ENCODE measurements at regions of chr17 and their contacts with region 1.

Region 1: DNA sequence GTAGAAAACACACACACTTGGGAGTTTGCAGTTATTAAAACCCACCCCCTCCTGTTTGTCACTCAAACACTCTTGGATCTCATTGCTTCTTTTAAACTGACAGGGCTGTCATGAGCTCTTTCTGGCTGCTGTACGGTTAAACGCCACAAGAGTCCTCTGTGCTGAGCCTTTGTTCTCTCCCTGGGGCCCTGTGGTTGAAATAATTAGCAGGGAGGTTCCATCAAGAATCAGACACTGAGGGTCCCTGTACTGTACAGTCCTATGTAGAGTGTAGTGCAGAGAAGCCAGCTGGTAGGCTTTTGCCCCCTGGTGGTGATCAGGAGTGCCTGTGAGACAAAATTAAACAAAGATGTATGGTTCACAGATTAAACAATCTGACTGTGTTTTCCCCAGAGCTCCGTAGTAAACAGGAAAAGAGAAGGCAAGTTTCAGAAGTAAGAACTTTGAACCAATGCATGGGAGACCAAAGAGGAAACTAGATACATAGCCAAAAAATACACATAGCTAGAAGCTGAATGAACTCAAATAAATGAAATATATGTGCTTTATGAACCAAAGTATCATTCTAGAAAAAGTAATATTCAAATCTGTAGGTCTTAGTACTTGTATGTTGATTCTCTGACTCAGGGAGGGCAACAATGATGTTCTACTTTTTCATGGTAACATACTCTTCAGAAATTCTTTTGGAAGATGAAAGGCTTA is 1.4 kb upstream of the SSH2 start:
- DNase-seq: peak; percentile 92
- ATAC-seq: peak; percentile 71
- H3K4me3 ChIP-seq: peak overlapping the region; percentile 77 to 94 (median 86)
- H3K4me3 Mint-ChIP-seq: no peak overlapping the region
- H3K27ac ChIP-seq: peak overlapping the region; percentile 28 to 86
- H3K27ac Mint-ChIP-seq: no peak overlapping the region
- H3K4me1 ChIP-seq: peaks cover 26 to 30% of the 10 kb centered on the region in 2 donors
- H3K4me1 Mint-ChIP-seq: peaks cover 34% of the 10 kb centered on the region
- H3K27me3 ChIP-seq: no peaks in the 10 kb centered on the region
- H3K27me3 Mint-ChIP-seq: no peaks in the 10 kb centered on the region
- CTCF ChIP-seq: peak; percentile 91

Region 2: GRCh38 chr17:29579866-29580771 is 351.3 kb before region 1 on chr17:
- CTCF ChIA-PET with region 1: interaction called, 17 read pairs
- POLR2A ChIA-PET with region 1: interaction called, 3 read pairs
- intact Hi-C with region 1: loop called (anchors 2 kb)
- DNase-seq: peak; percentile 93
- ATAC-seq: peak; percentile 96
- H3K4me3 ChIP-seq: no peak overlapping the region
- H3K4me3 Mint-ChIP-seq: no peak overlapping the region
- H3K27ac ChIP-seq: no peak overlapping the region
- H3K27ac Mint-ChIP-seq: peak overlapping the region; percentile 87
- H3K4me1 ChIP-seq: peaks cover 19 to 23% of the 10 kb centered on the region in 2 donors
- H3K4me1 Mint-ChIP-seq: peaks cover 27% of the 10 kb centered on the region
- H3K27me3 ChIP-seq: no peaks in the 10 kb centered on the region
- H3K27me3 Mint-ChIP-seq: no peaks in the 10 kb centered on the region
- CTCF ChIP-seq: peak; percentile 79

Region 3: GRCh38 chr17:29722411-29723198 is 208.8 kb before region 1 on chr17:
- CTCF ChIA-PET with region 1: interaction called, 13 read pairs
- POLR2A ChIA-PET with region 1: no interaction called
- intact Hi-C with region 1: loop called (anchors 1 kb)
- DNase-seq: peak; percentile 93
- ATAC-seq: peak; percentile 83
- H3K4me3 ChIP-seq: peak overlapping the region in 4 of 5 experiments; percentile 31 to 44 (median 37)
- H3K4me3 Mint-ChIP-seq: peak overlapping the region; percentile 78
- H3K27ac ChIP-seq: peak overlapping the region; percentile 81 to 94
- H3K27ac Mint-ChIP-seq: peak overlapping the region; percentile 91
- H3K4me1 ChIP-seq: peaks cover 91% of the 10 kb centered on the region in 2 donors
- H3K4me1 Mint-ChIP-seq: peaks cover 85% of the 10 kb centered on the region
- H3K27me3 ChIP-seq: no peaks in the 10 kb centered on the region
- H3K27me3 Mint-ChIP-seq: no peaks in the 10 kb centered on the region
- CTCF ChIP-seq: no peak

Region 4: GRCh38 chr17:29807520-29808351 is 123.6 kb before region 1 on chr17:
- CTCF ChIA-PET with region 1: interaction called, 359 read pairs
- POLR2A ChIA-PET with region 1: interaction called, 12 read pairs
- intact Hi-C with region 1: loop called (anchors 1 kb)
- DNase-seq: peak; percentile 76
- ATAC-seq: peak; percentile 77
- H3K4me3 ChIP-seq: peak overlapping the region in 1 of 5 experiments; percentile 9
- H3K4me3 Mint-ChIP-seq: peak overlapping the region; percentile 4
- H3K27ac ChIP-seq: no peak overlapping the region
- H3K27ac Mint-ChIP-seq: no peak overlapping the region
- H3K4me1 ChIP-seq: peaks cover 23 to 29% of the 10 kb centered on the region in 2 donors
- H3K4me1 Mint-ChIP-seq: peaks cover 27% of the 10 kb centered on the region
- H3K27me3 ChIP-seq: no peaks in the 10 kb centered on the region
- H3K27me3 Mint-ChIP-seq: no peaks in the 10 kb centered on the region
- CTCF ChIP-seq: peak; percentile 94

Region 5: DNA sequence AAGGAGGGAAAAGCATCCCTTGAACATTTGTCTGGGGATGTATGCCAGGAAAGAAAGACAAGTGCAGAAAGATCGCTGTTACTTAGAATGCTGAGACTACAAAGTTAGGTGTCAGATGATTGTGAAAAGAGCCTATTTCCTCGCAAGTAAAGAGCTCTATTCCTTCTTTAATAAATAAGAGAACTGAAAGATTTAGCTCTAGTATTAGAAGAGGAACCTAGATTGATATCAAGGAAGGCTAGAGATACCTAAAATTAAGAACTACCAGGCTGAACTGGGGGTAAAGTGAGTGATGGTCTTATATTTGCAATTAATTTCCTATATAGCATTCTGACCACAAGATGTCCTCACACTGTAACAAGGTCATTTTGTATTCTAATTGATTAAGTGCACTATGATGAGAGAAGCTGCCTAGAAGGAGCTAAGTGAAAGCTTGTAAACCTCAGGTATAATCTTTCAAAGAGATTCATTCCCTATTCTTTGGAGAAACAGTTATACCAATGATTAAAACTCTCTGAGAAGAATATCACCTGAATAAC is 63.7 kb before region 1 on chr17:
- CTCF ChIA-PET with region 1: interaction called, 71 read pairs
- POLR2A ChIA-PET with region 1: interaction called, 7 read pairs
- intact Hi-C with region 1: loop called (anchors 1 kb)
- DNase-seq: peak; percentile 29
- ATAC-seq: no peak
- H3K4me3 ChIP-seq: no peak overlapping the region
- H3K4me3 Mint-ChIP-seq: no peak overlapping the region
- H3K27ac ChIP-seq: no peak overlapping the region
- H3K27ac Mint-ChIP-seq: no peak overlapping the region
- H3K4me1 ChIP-seq: peaks cover 21 to 32% of the 10 kb centered on the region in 2 donors
- H3K4me1 Mint-ChIP-seq: peaks cover 45% of the 10 kb centered on the region
- H3K27me3 ChIP-seq: no peaks in the 10 kb centered on the region
- H3K27me3 Mint-ChIP-seq: no peaks in the 10 kb centered on the region
- CTCF ChIP-seq: no peak

Region 6: DNA sequence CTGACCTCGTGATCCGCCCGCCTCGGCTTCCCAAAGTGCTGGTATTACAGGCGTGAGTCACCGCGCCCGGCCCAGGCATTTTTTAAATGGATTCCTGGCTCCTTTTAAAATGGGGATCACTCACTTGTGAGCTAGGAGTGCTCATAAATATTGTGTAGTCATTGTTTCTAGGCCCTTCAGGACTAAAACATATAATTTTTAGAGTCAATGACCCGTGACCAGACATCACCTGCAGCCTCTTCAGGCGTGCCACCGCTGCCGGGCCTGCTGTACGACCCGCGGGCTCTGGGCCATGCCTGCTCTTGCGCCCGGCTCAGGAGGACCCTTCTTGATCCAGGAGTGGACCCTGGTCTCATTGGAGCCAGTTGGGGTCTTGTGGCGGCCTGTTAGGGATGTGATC is 40.9 kb after region 1 on chr17:
- CTCF ChIA-PET with region 1: no interaction called
- POLR2A ChIA-PET with region 1: no interaction called
- intact Hi-C with region 1: no loop called
- DNase-seq: no peak
- ATAC-seq: no peak
- H3K4me3 ChIP-seq: no peak overlapping the region
- H3K4me3 Mint-ChIP-seq: no peak overlapping the region
- H3K27ac ChIP-seq: no peak overlapping the region
- H3K27ac Mint-ChIP-seq: no peak overlapping the region
- H3K4me1 ChIP-seq: peaks cover 0 to 4% of the 10 kb centered on the region in 2 donors
- H3K4me1 Mint-ChIP-seq: peaks cover 4% of the 10 kb centered on the region
- H3K27me3 ChIP-seq: no peaks in the 10 kb centered on the region
- H3K27me3 Mint-ChIP-seq: no peaks in the 10 kb centered on the region
- CTCF ChIP-seq: no peak

Region 7: GRCh38 chr17:30000001-30000754 is 68.8 kb after region 1 on chr17:
- CTCF ChIA-PET with region 1: interaction called, 10 read pairs
- POLR2A ChIA-PET with region 1: no interaction called
- intact Hi-C with region 1: no loop called
- DNase-seq: no peak
- ATAC-seq: no peak
- H3K4me3 ChIP-seq: no peak overlapping the region
- H3K4me3 Mint-ChIP-seq: no peak overlapping the region
- H3K27ac ChIP-seq: no peak overlapping the region
- H3K27ac Mint-ChIP-seq: no peak overlapping the region
- H3K4me1 ChIP-seq: no peaks in the 10 kb centered on the region
- H3K4me1 Mint-ChIP-seq: peaks cover 3% of the 10 kb centered on the region
- H3K27me3 ChIP-seq: no peaks in the 10 kb centered on the region
- H3K27me3 Mint-ChIP-seq: no peaks in the 10 kb centered on the region
- CTCF ChIP-seq: no peak

Region 8: GRCh38 chr17:30031214-30031869 is 100.0 kb after region 1 on chr17:
- CTCF ChIA-PET with region 1: no interaction called
- POLR2A ChIA-PET with region 1: no interaction called
- intact Hi-C with region 1: no loop called
- DNase-seq: no peak
- ATAC-seq: no peak
- H3K4me3 ChIP-seq: no peak overlapping the region
- H3K4me3 Mint-ChIP-seq: no peak overlapping the region
- H3K27ac ChIP-seq: no peak overlapping the region
- H3K27ac Mint-ChIP-seq: no peak overlapping the region
- H3K4me1 ChIP-seq: no peaks in the 10 kb centered on the region
- H3K4me1 Mint-ChIP-seq: no peaks in the 10 kb centered on the region
- H3K27me3 ChIP-seq: no peaks in the 10 kb centered on the region
- H3K27me3 Mint-ChIP-seq: no peaks in the 10 kb centered on the region
- CTCF ChIP-seq: no peak